Activated CD8-positive, alpha-beta memory T cell treated with anti-CD3 and anti-CD28 coated beads, Interleukin-2, amount 10 ng/mL, durations not matched to agents 7 days and 5 days (primary cell): ENCODE measurements at regions of chr1 and their contacts with region 1.

Region 1: DNA sequence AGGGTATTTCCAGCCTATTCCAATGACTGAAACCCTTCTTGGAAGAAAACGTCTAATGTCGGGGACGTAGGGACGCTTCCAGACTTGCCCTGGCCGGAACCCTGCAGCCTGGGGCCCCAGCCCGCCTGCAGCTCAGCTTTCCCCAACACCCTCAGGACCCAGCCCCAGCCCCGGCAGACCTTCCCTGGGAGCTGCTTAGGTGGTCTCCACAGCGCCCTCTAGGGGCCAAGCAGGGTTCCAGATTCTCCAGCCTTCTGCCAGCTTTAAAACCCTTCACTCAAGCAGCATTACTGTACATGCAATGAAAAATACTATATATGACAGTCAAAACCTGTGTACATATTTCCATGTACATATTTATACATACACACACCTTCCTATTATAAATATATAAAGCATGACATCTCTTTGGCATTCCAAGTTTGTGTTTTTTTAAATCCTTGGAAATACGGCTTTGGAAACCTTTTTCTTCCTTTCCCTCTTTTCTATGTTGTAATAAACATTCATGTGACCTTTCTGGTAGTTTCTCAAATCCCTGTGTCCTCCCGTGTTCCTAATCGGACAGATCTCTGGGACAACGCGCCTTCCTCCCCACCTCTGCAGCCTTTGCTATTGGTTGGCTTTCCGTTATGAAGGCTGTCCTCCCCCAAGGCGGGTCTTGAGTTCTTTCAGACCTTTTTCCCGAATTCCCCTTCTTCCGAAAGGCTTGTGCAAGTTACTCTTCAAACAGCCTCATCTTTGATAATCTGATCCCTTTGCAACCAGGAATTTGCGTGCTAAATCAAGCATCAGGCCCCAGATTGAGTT is 60.3 kb downstream of the STUM start:
- DNase-seq: peak; percentile 76
- ATAC-seq: peak; percentile 85
- H3K4me3 Mint-ChIP-seq: no peak overlapping the region
- H3K27ac Mint-ChIP-seq: no peak overlapping the region
- H3K4me1 Mint-ChIP-seq: no peaks in the 10 kb centered on the region
- H3K27me3 Mint-ChIP-seq: no peaks in the 10 kb centered on the region

Region 2: DNA sequence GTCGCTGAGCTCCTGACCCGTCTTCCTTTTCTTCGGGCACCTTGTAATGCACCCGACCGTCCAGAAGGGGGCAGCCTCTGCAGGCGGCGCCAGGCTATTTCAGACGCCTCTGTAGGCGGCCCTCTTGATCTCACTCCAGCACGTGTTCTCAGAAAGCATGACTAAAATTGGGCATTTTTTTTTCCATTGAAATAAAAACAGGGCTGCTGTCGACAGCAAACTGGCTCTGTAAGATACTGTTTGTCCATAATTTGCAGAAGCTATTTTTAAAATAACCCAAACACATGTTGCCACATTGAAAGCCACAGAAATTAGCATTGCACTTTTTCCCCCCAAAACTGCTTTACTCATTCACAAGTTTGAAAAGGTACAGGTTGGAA is 17.7 kb after region 1 on chr1:
- CTCF ChIA-PET with region 1: interaction called, 11 read pairs
- DNase-seq: peak; percentile 87
- ATAC-seq: peak; percentile 92
- H3K4me3 Mint-ChIP-seq: no peak overlapping the region
- H3K27ac Mint-ChIP-seq: peak overlapping the region; percentile 14
- H3K4me1 Mint-ChIP-seq: peaks cover 16% of the 10 kb centered on the region
- H3K27me3 Mint-ChIP-seq: peaks cover 3% of the 10 kb centered on the region